Mammary epithelial cell (primary cell): ENCODE measurements at regions of chr1 and their contacts with region 1.

Region 1: GRCh38 chr1:67685067-67685557 is at the start of gene GADD45A:
- DNase-seq: peak; percentile 99
- H3K4me3 ChIP-seq: peak within 1 kb of the TSS; percentile 78 to 96 (median 79)
- H3K27ac ChIP-seq: peak within 1 kb of the TSS; percentile 97
- H3K4me1 ChIP-seq: peaks cover 26% of the 10 kb centered on the region
- H3K27me3 ChIP-seq: no peaks in the 10 kb centered on the region
- CTCF ChIP-seq: no peak
- total RNA-seq, gene GADD45A: 119 to 371 TPM

Region 2: DNA sequence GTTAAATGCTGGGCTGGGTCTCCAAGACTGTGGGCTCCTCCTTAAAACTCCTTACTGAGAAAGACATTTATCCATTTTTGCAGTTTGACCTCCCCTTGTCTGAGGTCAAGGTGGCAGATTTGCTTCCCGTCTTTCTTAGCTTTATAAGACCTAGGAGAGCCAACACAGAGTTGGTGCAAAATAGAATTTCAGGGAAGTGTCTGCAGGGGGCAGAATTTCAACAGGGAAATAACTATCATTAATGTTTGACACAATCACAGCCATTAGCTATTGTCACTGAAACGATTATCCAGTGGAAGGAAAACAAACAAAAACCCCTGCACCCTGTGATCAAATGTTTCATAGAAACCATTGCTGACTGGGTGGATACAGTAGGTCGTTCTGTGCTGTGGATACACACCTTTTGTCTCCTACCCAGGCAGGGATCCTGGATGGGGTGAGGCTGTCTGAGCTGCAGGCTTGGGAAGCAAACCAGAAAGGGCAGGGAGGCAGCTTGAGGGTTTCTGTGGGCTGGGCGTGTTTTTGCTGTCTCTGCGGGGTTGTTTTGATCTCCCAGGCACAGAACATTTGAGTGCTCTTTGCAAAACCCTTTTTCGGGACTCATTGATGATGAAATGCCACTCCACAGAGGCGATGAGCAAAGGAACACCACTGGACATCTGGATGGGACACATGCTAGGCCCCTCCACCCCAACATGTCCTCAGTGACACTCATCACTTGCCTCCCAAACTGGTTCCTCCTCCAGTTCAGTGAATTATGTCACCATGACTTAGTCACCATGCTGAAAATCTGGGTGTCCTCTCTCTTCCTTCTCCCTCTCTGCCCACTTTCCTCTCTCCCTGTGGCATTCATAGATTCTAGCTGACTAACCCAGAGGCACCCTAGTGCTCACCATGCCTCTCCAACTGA is 160.7 kb before region 1 on chr1:
- CTCF ChIA-PET with region 1: no interaction called
- dilution Hi-C with region 1: no loop called
- in situ Hi-C with region 1: no loop called
- intact Hi-C with region 1: no loop called
- DNase-seq: peak; percentile 48
- H3K4me3 ChIP-seq: no peak overlapping the region
- H3K27ac ChIP-seq: no peak overlapping the region
- H3K4me1 ChIP-seq: no peaks in the 10 kb centered on the region
- H3K27me3 ChIP-seq: no peaks in the 10 kb centered on the region
- CTCF ChIP-seq: peak; percentile 33 to 43

Region 3: DNA sequence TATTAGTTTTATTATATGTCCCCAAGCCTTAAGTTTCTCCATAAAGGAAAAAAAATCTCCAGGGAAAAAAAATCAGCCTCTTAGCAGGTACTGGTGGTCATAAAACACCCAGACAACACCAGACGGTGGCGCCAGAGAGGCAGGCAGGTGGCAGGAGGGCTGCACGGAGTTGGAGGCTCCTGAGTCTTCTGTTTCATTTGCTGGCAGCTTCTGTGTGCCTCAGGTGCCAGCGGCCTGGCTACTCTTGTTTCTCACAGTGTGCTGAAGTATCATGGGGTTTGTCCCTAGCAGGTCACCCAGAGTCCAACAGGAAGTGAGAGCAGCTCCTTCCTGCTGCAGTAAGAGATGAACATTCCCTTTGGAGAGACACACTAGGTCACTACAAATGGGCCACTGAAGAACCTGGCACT is 123.4 kb before region 1 on chr1:
- CTCF ChIA-PET with region 1: interaction called, 6 read pairs
- dilution Hi-C with region 1: no loop called
- in situ Hi-C with region 1: no loop called
- intact Hi-C with region 1: loop called (anchors 1 kb)
- DNase-seq: peak; percentile 85
- H3K4me3 ChIP-seq: no peak overlapping the region
- H3K27ac ChIP-seq: peak overlapping the region; percentile 54
- H3K4me1 ChIP-seq: peaks cover 16% of the 10 kb centered on the region
- H3K27me3 ChIP-seq: no peaks in the 10 kb centered on the region
- CTCF ChIP-seq: peak; percentile 93 to 97

Region 4: GRCh38 chr1:67582625-67583461 is 102.3 kb before region 1 on chr1:
- CTCF ChIA-PET with region 1: no interaction called
- dilution Hi-C with region 1: loop called (anchors 5 kb)
- in situ Hi-C with region 1: no loop called
- intact Hi-C with region 1: no loop called
- DNase-seq: no peak
- H3K4me3 ChIP-seq: no peak overlapping the region
- H3K27ac ChIP-seq: no peak overlapping the region
- H3K4me1 ChIP-seq: peaks cover 6% of the 10 kb centered on the region
- H3K27me3 ChIP-seq: no peaks in the 10 kb centered on the region
- CTCF ChIP-seq: no peak

Region 5: DNA sequence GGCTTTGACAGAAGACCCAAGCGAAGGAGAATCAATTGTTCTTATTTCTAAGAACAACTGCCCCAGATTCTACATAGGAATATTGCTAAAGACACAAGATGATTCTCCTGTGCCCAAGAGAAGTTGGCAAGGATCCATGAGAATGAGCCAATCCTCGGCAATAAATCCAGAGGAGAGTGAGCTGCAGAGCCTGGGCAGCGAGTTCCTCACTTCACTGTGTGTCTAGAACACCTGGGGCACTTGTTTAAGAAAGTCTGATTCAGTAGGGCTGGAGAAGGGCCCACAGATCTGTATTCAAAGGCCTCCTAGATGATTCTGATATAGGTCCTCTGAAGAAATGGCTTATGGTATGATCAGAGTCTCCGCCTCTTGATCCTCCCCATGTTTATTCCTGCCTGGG is 31.7 kb after region 1 on chr1:
- CTCF ChIA-PET with region 1: interaction called, 4 read pairs
- dilution Hi-C with region 1: no loop called
- in situ Hi-C with region 1: no loop called
- intact Hi-C with region 1: loop called (anchors 2 kb)
- DNase-seq: peak; percentile 83
- H3K4me3 ChIP-seq: no peak overlapping the region
- H3K27ac ChIP-seq: peak overlapping the region; percentile 32
- H3K4me1 ChIP-seq: peaks cover 44% of the 10 kb centered on the region
- H3K27me3 ChIP-seq: no peaks in the 10 kb centered on the region
- CTCF ChIP-seq: no peak

Region 6: GRCh38 chr1:67749844-67750689 is 65.0 kb after region 1 on chr1:
- CTCF ChIA-PET with region 1: interaction called, 3 read pairs
- dilution Hi-C with region 1: no loop called
- in situ Hi-C with region 1: loop called (anchors 5 kb)
- intact Hi-C with region 1: loop called (anchors 1 kb)
- DNase-seq: peak; percentile 98
- H3K4me3 ChIP-seq: peak overlapping the region; percentile 19 to 30 (median 21)
- H3K27ac ChIP-seq: peak overlapping the region; percentile 100
- H3K4me1 ChIP-seq: peaks cover 81% of the 10 kb centered on the region
- H3K27me3 ChIP-seq: no peaks in the 10 kb centered on the region
- CTCF ChIP-seq: no peak

Region 7: GRCh38 chr1:67814121-67814772 is 129.1 kb after region 1 on chr1:
- CTCF ChIA-PET with region 1: no interaction called
- dilution Hi-C with region 1: no loop called
- in situ Hi-C with region 1: no loop called
- intact Hi-C with region 1: no loop called
- DNase-seq: no peak
- H3K4me3 ChIP-seq: no peak overlapping the region
- H3K27ac ChIP-seq: peak overlapping the region; percentile 70
- H3K4me1 ChIP-seq: peaks cover 45% of the 10 kb centered on the region
- H3K27me3 ChIP-seq: no peaks in the 10 kb centered on the region
- CTCF ChIP-seq: no peak

Region 8: GRCh38 chr1:67832737-67833601 is 147.9 kb after region 1 on chr1 and contains the start of gene GNG12:
- CTCF ChIA-PET with region 1: no interaction called
- dilution Hi-C with region 1: no loop called
- in situ Hi-C with region 1: loop called in 1 of 2 experiments (anchors 10 kb)
- intact Hi-C with region 1: loop called (anchors 2 kb)
- DNase-seq: peak; percentile 77
- H3K4me3 ChIP-seq: peak within 1 kb of the TSS; percentile 72 to 92 (median 90)
- H3K27ac ChIP-seq: peak within 1 kb of the TSS; percentile 90
- H3K4me1 ChIP-seq: peaks cover 54% of the 10 kb centered on the region
- H3K27me3 ChIP-seq: no peaks in the 10 kb centered on the region
- CTCF ChIP-seq: no peak
- total RNA-seq, gene GNG12: 130 to 183 TPM

Region 9: GRCh38 chr1:68570871-68571270 is 885.8 kb after region 1 on chr1:
- CTCF ChIA-PET with region 1: no interaction called
- dilution Hi-C with region 1: no loop called
- in situ Hi-C with region 1: no loop called
- intact Hi-C with region 1: no loop called
- DNase-seq: no peak
- H3K4me3 ChIP-seq: no peak overlapping the region
- H3K27ac ChIP-seq: no peak overlapping the region
- H3K4me1 ChIP-seq: no peaks in the 10 kb centered on the region
- H3K27me3 ChIP-seq: no peaks in the 10 kb centered on the region
- CTCF ChIP-seq: no peak